Activated B cell treated with CpG ODN at 0.5 μM for 24 hours (primary cell): ENCODE measurements at regions of chr10 and their contacts with region 1.

Region 1: GRCh38 chr10:60646966-60647796 is 131.1 kb upstream of the CDK1 start:
- DNase-seq: no peak
- ATAC-seq: peak; percentile 42
- H3K4me3 Mint-ChIP-seq: no peak overlapping the region
- H3K27ac Mint-ChIP-seq: no peak overlapping the region
- H3K4me1 Mint-ChIP-seq: peaks cover 1% of the 10 kb centered on the region
- H3K27me3 Mint-ChIP-seq: no peaks in the 10 kb centered on the region
- CTCF ChIP-seq: peak; percentile 79

Region 2: DNA sequence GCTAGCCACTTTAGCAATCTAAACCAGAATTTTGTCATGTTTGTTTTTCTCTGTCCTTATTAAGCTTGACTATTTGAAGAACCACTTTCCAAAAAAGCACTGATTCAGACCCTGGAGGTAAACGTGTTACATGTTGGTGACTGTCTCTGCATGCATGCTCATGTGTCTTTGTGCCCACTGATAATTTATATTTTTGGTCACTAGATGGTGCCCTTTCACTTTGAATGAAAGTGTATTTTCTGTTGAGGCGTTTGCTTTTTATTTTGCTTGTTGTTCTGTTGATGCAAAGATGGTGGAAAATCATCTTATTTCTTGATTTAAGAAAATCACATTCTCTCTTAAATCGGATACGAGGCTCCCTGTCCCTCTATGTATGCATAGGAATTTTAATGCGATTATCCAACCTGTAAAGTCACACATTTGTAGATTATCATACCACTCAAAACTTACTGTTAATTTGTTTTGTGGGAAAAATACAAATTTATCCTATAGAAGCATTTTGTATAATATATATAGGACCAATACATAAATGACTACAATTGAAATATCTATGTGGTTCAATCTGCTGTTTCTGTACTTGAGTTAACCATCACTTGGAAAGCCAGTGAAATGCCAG is 1865.2 kb before region 1 on chr10:
- CTCF ChIA-PET with region 1: no interaction called
- POLR2A ChIA-PET with region 1: no interaction called
- intact Hi-C with region 1: loop called (anchors 2 kb)
- DNase-seq: no peak
- ATAC-seq: no peak
- H3K4me3 Mint-ChIP-seq: no peak overlapping the region
- H3K27ac Mint-ChIP-seq: no peak overlapping the region
- H3K4me1 Mint-ChIP-seq: no peaks in the 10 kb centered on the region
- H3K27me3 Mint-ChIP-seq: no peaks in the 10 kb centered on the region
- CTCF ChIP-seq: no peak

Region 3: GRCh38 chr10:59625721-59626522 is 1021.3 kb before region 1 on chr10:
- CTCF ChIA-PET with region 1: interaction called, 10 read pairs
- POLR2A ChIA-PET with region 1: no interaction called
- intact Hi-C with region 1: loop called (anchors 1 kb)
- DNase-seq: no peak
- ATAC-seq: peak; percentile 85
- H3K4me3 Mint-ChIP-seq: no peak overlapping the region
- H3K27ac Mint-ChIP-seq: no peak overlapping the region
- H3K4me1 Mint-ChIP-seq: peaks cover 3% of the 10 kb centered on the region
- H3K27me3 Mint-ChIP-seq: no peaks in the 10 kb centered on the region
- CTCF ChIP-seq: peak; percentile 42

Region 4: GRCh38 chr10:60099998-60100747 is 547.0 kb before region 1 on chr10:
- CTCF ChIA-PET with region 1: interaction called, 43 read pairs
- POLR2A ChIA-PET with region 1: no interaction called
- intact Hi-C with region 1: loop called (anchors 1 kb)
- DNase-seq: no peak
- ATAC-seq: no peak
- H3K4me3 Mint-ChIP-seq: no peak overlapping the region
- H3K27ac Mint-ChIP-seq: no peak overlapping the region
- H3K4me1 Mint-ChIP-seq: no peaks in the 10 kb centered on the region
- H3K27me3 Mint-ChIP-seq: no peaks in the 10 kb centered on the region
- CTCF ChIP-seq: peak; percentile 70

Region 5: DNA sequence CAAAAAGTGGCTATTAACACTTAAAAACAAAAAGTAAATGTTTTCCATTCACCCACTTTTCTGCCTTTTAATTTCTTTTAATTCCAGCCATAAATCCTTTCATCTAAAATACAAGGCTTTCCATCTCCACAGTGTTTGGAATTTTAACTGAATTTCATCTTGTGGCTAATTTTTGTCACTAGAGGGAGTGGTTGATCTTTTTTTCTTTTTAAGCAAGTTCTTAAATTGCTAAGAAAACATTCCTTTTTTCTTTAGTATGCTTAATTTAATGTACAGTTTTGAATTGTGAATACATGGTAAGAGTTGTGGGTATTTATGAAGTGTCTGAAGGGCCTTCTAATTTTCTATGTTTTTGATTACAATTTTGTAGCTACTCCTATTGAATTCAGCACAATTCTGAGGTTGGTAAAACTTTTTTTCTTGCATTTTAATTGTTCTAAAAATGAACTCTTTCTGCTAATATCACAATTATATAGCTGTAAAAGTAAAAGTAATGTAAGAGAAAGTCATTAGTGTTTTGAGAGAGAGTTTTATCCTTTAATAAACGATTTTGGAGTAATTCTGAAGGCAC is 202.6 kb before region 1 on chr10:
- CTCF ChIA-PET with region 1: interaction called, 61 read pairs
- POLR2A ChIA-PET with region 1: interaction called, 3 read pairs
- intact Hi-C with region 1: loop called (anchors 1 kb)
- DNase-seq: no peak
- ATAC-seq: no peak
- H3K4me3 Mint-ChIP-seq: no peak overlapping the region
- H3K27ac Mint-ChIP-seq: no peak overlapping the region
- H3K4me1 Mint-ChIP-seq: peaks cover 8% of the 10 kb centered on the region
- H3K27me3 Mint-ChIP-seq: no peaks in the 10 kb centered on the region
- CTCF ChIP-seq: no peak

Region 6: GRCh38 chr10:60769406-60769805 is 122.2 kb after region 1 on chr10:
- CTCF ChIA-PET with region 1: interaction called, 12 read pairs
- POLR2A ChIA-PET with region 1: no interaction called
- intact Hi-C with region 1: loop called (anchors 2 kb)
- DNase-seq: no peak
- ATAC-seq: no peak
- H3K4me3 Mint-ChIP-seq: no peak overlapping the region
- H3K27ac Mint-ChIP-seq: no peak overlapping the region
- H3K4me1 Mint-ChIP-seq: no peaks in the 10 kb centered on the region
- H3K27me3 Mint-ChIP-seq: no peaks in the 10 kb centered on the region
- CTCF ChIP-seq: no peak